Endothelial cell of umbilical vein (primary cell): ENCODE measurements at regions of chr9 and their contacts with region 1.

Region 1: DNA sequence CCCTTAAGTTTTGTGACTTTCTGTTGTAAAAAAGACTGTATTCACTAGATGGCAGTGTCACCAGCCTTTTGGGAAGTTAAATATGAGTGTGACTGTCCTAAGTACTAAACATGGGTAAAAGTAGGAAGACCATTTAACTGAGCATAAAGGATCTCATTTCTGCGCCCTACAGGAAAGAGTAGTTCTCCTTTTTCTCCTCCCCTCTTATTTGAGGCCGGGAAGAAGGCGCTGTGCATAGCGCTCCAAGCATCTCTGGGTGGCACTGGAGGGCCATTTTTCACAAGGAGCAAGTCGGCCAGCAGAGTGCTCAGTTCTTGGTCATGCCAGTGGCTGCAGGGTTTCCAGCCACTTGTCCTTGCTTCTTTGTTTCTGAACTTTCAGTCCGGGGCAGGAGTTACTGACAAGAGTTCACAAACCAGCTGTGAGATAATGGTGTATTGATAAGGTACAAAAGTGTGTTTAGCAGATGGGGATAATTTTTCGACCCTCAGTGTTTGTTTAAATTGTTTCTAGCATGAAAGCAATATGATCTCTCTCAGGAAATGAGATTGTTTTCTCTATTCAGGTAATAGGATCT is 227.6 kb upstream of the DMRT1 start:
- DNase-seq: peak; percentile 95
- H3K4me3 ChIP-seq: no peak overlapping the region
- H3K27ac ChIP-seq: peak overlapping the region; percentile 2
- H3K4me1 ChIP-seq: peaks cover 11% of the 10 kb centered on the region
- H3K27me3 ChIP-seq: no peaks in the 10 kb centered on the region
- CTCF ChIP-seq: peak; percentile 82 to 92
- POLR2A ChIP-seq: no peak

Region 2: GRCh38 chr9:385818-386398 is 228.0 kb before region 1 on chr9:
- CTCF ChIA-PET with region 1: no interaction called
- POLR2A ChIA-PET with region 1: no interaction called
- dilution Hi-C with region 1: no loop called
- intact Hi-C with region 1: loop called (anchors 1 kb)
- DNase-seq: peak; percentile 76
- H3K4me3 ChIP-seq: no peak overlapping the region
- H3K27ac ChIP-seq: no peak overlapping the region
- H3K4me1 ChIP-seq: no peaks in the 10 kb centered on the region
- H3K27me3 ChIP-seq: no peaks in the 10 kb centered on the region
- CTCF ChIP-seq: peak; percentile 73 to 79
- POLR2A ChIP-seq: no peak

Region 3: GRCh38 chr9:684054-684890 is 70.4 kb after region 1 on chr9:
- CTCF ChIA-PET with region 1: no interaction called
- POLR2A ChIA-PET with region 1: no interaction called
- dilution Hi-C with region 1: no loop called
- intact Hi-C with region 1: loop called (anchors 2 kb)
- DNase-seq: peak; percentile 81
- H3K4me3 ChIP-seq: peak overlapping the region; percentile 19 to 70 (median 27)
- H3K27ac ChIP-seq: peak overlapping the region; percentile 99
- H3K4me1 ChIP-seq: peaks cover 58% of the 10 kb centered on the region
- H3K27me3 ChIP-seq: no peaks in the 10 kb centered on the region
- CTCF ChIP-seq: no peak
- POLR2A ChIP-seq: no peak

Region 4: GRCh38 chr9:706606-707459 is 93.0 kb after region 1 on chr9:
- CTCF ChIA-PET with region 1: interaction called, 3 read pairs
- POLR2A ChIA-PET with region 1: no interaction called
- dilution Hi-C with region 1: no loop called
- intact Hi-C with region 1: loop called (anchors 1 kb)
- DNase-seq: peak; percentile 68
- H3K4me3 ChIP-seq: peak overlapping the region; percentile 2 to 81 (median 41)
- H3K27ac ChIP-seq: peak overlapping the region; percentile 86
- H3K4me1 ChIP-seq: peaks cover 25% of the 10 kb centered on the region
- H3K27me3 ChIP-seq: no peaks in the 10 kb centered on the region
- CTCF ChIP-seq: no peak
- POLR2A ChIP-seq: no peak

Region 5: GRCh38 chr9:763692-764524 is 150.0 kb after region 1 on chr9:
- CTCF ChIA-PET with region 1: interaction called, 14 read pairs
- POLR2A ChIA-PET with region 1: no interaction called
- dilution Hi-C with region 1: loop called (anchors 25 kb)
- intact Hi-C with region 1: loop called (anchors 1 kb)
- DNase-seq: peak; percentile 90
- H3K4me3 ChIP-seq: peak overlapping the region in 1 of 3 experiments; percentile 20
- H3K27ac ChIP-seq: no peak overlapping the region
- H3K4me1 ChIP-seq: peaks cover 2% of the 10 kb centered on the region
- H3K27me3 ChIP-seq: peaks cover 3% of the 10 kb centered on the region in 2 experiments
- CTCF ChIP-seq: peak; percentile 90 to 96
- POLR2A ChIP-seq: no peak

Region 6: GRCh38 chr9:841371-842209 is 227.7 kb after region 1 on chr9 and contains the start of gene DMRT1:
- CTCF ChIA-PET with region 1: interaction called, 4 read pairs
- POLR2A ChIA-PET with region 1: no interaction called
- dilution Hi-C with region 1: no loop called
- intact Hi-C with region 1: loop called (anchors 1 kb)
- DNase-seq: no peak
- H3K4me3 ChIP-seq: no peak within 1 kb of the TSS
- H3K27ac ChIP-seq: no peak within 1 kb of the TSS
- H3K4me1 ChIP-seq: no peaks in the 10 kb centered on the region
- H3K27me3 ChIP-seq: peaks cover 37 to 51% of the 10 kb centered on the region in 2 experiments
- CTCF ChIP-seq: no peak
- POLR2A ChIP-seq: no peak
- total RNA-seq, gene DMRT1: 0.20 TPM in 1 of 2 replicates, not detected in the other

Region 7: GRCh38 chr9:1009101-1009707 is 395.3 kb after region 1 on chr9:
- CTCF ChIA-PET with region 1: interaction called, 7 read pairs
- POLR2A ChIA-PET with region 1: no interaction called
- dilution Hi-C with region 1: no loop called
- intact Hi-C with region 1: loop called (anchors 1 kb)
- DNase-seq: peak; percentile 69
- H3K4me3 ChIP-seq: no peak overlapping the region
- H3K27ac ChIP-seq: no peak overlapping the region
- H3K4me1 ChIP-seq: no peaks in the 10 kb centered on the region
- H3K27me3 ChIP-seq: no peaks in the 10 kb centered on the region
- CTCF ChIP-seq: peak; percentile 90 to 95
- POLR2A ChIP-seq: no peak